A549 (cell line): ENCODE measurements at regions of chr3 and their contacts with region 1.

Region 1: DNA sequence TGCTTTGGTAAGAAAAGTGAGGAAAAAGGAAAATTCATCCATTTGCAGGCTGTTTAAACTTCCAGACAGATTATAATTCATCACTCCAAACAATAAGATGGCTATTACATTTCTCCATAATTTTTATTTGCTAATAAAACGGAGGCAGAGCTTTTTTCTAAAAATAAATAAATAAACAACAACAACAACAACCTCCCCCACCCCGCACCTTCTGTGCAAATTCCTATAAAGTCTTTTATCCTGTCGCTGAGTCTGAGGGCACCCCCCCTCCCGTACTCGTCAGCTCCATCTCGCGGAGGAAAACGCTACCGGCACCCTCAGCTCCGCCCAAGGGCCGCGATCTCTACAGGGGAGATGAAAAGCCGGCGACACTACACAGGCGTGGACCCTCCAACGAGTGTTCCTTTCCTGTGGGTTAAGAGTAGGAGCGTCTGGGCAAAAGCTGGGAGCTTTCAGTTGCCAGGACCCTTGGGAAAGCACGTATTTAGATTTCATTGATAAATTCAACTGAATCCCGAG is 1.0 kb upstream of the ATP1B3 start:
- DNase-seq: peak; percentile 86 to 89
- ATAC-seq: peak; percentile 72 to 92
- H3K4me3 ChIP-seq: peak overlapping the region; percentile 92
- H3K27ac ChIP-seq: peak overlapping the region; percentile 91 to 95
- H3K4me1 ChIP-seq: peaks cover 19% of the 10 kb centered on the region
- CTCF ChIP-seq: peak; percentile 75
- EP300 ChIP-seq: no peak
- POLR2A ChIP-seq: no peak
- RAD21 ChIP-seq: peak; percentile 61 to 67; a peak in 4 of 5 replicates

Region 2: DNA sequence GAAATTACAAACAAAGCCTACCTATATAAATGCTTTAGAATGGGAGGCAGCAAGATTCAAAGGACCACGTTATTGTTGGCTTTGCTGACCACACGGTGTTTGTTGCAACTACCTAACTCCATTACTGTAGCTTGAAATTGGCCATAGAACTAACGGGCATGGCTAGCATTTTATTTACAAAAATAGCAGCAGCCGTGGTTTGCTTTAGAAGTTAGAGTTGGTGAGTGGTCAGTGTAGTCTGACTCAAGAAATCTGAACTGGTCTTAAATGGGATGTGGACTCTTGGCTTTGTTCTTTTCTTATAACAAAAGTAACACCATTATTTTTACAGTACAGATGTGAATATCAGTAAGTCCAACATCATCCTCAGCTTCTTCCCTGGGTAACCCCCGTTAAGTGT is 11.6 kb after region 1 on chr3:
- CTCF ChIA-PET with region 1: interaction called, 21 read pairs
- POLR2A ChIA-PET with region 1: no interaction called
- DNase-seq: no peak
- ATAC-seq: no peak
- H3K4me3 ChIP-seq: no peak overlapping the region
- H3K27ac ChIP-seq: no peak overlapping the region
- H3K4me1 ChIP-seq: no peaks in the 10 kb centered on the region
- CTCF ChIP-seq: no peak
- EP300 ChIP-seq: no peak
- POLR2A ChIP-seq: no peak
- RAD21 ChIP-seq: no peak